Dorsolateral prefrontal cortex (tissue), 120 donors: ENCODE measurements at regions of chr14 and their contacts with region 1.

Region 1: GRCh38 chr14:100375963-100376735 is 53.0 kb downstream of the SLC25A47 start:
- DNase-seq: peak; percentile 80 to 95 (median 89)
- H3K4me3 ChIP-seq: peak within 1 kb of the TSS; percentile 62 to 98 (median 88)
- H3K27ac ChIP-seq: peak within 1 kb of the TSS in 58 of 59 donors; percentile 13 to 95 (median 82)
- H3K27me3 ChIP-seq: no peaks in the 10 kb centered on the region
- CTCF ChIP-seq: peak in 44 of 56 donors; percentile 0 to 66 (median 38)

Region 2: DNA sequence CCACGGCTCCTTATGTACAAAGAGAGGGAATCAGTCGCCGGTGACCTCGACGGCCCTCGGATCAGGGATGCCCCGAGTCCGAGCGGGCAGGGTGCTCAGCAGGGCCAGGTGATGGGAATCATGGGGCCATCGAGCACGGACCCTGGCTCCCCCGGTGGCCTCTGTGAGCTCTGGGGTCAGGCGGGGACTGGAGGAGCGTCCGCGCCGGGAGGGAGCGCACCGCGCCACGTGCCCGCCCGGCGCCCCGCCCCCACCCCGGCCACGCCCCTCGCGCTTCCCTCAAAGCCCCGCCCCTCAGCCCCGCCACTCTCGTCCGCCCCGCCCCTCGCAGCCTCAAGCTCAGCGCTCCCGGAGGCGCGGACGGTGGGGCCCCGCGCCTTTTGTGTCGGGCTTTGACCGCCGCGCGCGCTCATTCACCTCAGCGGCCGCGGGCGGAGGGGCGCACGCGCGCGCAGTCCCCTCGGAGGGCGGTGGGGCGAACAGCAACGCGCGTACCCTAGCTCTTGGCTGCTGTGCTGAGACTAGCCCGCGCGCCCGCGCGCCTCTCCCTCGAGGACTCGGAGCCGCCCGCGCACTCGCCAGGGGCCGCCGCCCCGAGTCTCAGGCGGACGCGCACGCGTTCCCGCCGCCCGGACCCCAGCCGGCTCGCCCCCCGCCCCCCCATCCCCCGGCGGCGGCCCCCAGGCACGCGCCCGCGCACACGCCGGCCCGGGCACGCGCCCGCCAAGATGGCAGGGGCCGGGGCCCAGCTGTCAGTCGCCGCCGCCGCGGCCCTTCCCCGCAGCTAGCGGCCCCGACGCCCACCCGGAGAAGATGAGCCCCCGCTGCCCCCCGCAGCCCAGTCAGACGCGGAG is 404.8 kb before region 1 on chr14:
- intact Hi-C with region 1: no loop called
- DNase-seq: peak; percentile 67 to 85 (median 78)
- H3K4me3 ChIP-seq: peak overlapping the region; percentile 40 to 92 (median 81)
- H3K27ac ChIP-seq: peak overlapping the region in 48 of 59 donors; percentile 38 to 90 (median 75)
- H3K27me3 ChIP-seq: no peaks in the 10 kb centered on the region
- CTCF ChIP-seq: peak in 24 of 56 donors; percentile 5 to 35 (median 21)

Region 3: GRCh38 chr14:99982537-99983250 is 393.5 kb before region 1 on chr14:
- intact Hi-C with region 1: loop called (anchors 10 kb)
- DNase-seq: peak in 5 of 10 donors; percentile 43 to 66 (median 57)
- H3K4me3 ChIP-seq: peak overlapping the region in 5 of 59 donors; percentile 3 to 31 (median 11)
- H3K27ac ChIP-seq: peak overlapping the region in 10 of 59 donors; percentile 4 to 57 (median 34)
- H3K27me3 ChIP-seq: no peaks in the 10 kb centered on the region
- CTCF ChIP-seq: peak; percentile 80 to 98 (median 92)

Region 4: DNA sequence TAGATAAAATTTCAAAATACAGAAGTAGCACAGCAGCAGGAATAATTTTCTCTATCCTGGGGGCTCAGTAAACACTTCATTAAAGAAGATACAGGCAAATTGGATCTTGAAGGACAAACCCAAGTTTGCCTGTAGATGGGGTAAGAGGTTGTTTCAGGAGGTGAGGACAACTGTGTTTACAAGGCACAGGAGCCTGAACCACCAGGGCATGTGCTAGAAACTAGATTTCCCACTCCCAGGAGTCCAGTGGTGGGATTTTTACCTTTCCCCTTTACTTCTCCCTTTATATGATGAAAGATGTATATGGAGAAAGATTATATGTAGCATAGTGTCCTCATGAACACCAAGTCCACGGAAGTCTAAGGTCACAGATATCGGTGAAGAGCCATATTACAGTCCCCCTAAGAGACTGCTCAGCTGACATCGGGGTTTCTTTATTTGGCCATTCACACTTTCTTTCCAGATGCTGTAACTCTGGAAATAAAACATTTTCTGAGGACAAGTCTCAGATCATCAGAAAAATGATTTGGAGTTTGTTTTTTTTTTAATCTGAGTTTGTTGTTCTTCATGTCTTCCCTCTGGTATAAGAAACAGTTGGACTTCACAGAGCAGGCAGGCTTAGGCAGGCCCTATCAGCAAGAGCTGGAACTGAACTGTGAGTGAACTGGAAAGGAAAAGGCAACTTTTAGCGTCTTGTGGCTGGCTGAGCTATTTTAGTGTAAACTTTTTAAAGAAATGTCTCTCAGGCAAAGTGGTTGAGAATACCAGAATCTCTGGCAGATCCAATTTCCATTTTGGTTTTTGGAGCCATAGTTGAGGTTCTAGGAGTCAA is 319.0 kb before region 1 on chr14:
- intact Hi-C with region 1: no loop called
- DNase-seq: no peak
- H3K4me3 ChIP-seq: no peak overlapping the region
- H3K27ac ChIP-seq: peak overlapping the region in 4 of 59 donors; percentile 0 to 23 (median 6)
- H3K27me3 ChIP-seq: no peaks in the 10 kb centered on the region
- CTCF ChIP-seq: peak in 32 of 56 donors; percentile 8 to 57 (median 24)

Region 5: GRCh38 chr14:100285021-100285912 is 90.9 kb before region 1 on chr14:
- intact Hi-C with region 1: loop called in 1 of 2 experiments (anchors 5 kb)
- DNase-seq: peak in 6 of 10 donors; percentile 41 to 84 (median 60)
- H3K4me3 ChIP-seq: peak overlapping the region; percentile 72 to 97 (median 86)
- H3K27ac ChIP-seq: peak overlapping the region; percentile 49 to 98 (median 90)
- H3K27me3 ChIP-seq: no peaks in the 10 kb centered on the region
- CTCF ChIP-seq: peak in 55 of 56 donors; percentile 53 to 90 (median 75)

Region 6: GRCh38 chr14:100306420-100307219 is 69.5 kb before region 1 on chr14 and contains the start of gene SLC25A29:
- intact Hi-C with region 1: loop called (anchors 1 to 5 kb)
- DNase-seq: peak; percentile 84 to 97 (median 91)
- H3K4me3 ChIP-seq: peak within 1 kb of the TSS; percentile 73 to 99 (median 93)
- H3K27ac ChIP-seq: peak within 1 kb of the TSS; percentile 25 to 98 (median 88)
- H3K27me3 ChIP-seq: no peaks in the 10 kb centered on the region
- CTCF ChIP-seq: peak in 21 of 56 donors; percentile 4 to 59 (median 16)
- total RNA-seq, gene SLC25A29: 58.8 to 204 (median 102) TPM